Right cardiac atrium (tissue), 5 donors: ENCODE measurements at regions of chr11 and their contacts with region 1.

Region 1: GRCh38 chr11:5791165-5791564 is at the start of gene OR52N1:
- DNase-seq: no peak
- ATAC-seq: no peak
- H3K4me3 ChIP-seq: no peak within 1 kb of the TSS
- H3K27ac ChIP-seq: no peak within 1 kb of the TSS
- H3K4me1 ChIP-seq: no peaks in the 10 kb centered on the region
- H3K27me3 ChIP-seq: no peaks in the 10 kb centered on the region
- total RNA-seq, gene OR52N1: not detected

Region 2: GRCh38 chr11:5767056-5767455 is 24.1 kb before region 1 on chr11:
- intact Hi-C with region 1: loop called in 1 of 4 experiments (anchors 2 kb)
- DNase-seq: no peak
- ATAC-seq: no peak
- H3K4me3 ChIP-seq: no peak overlapping the region
- H3K27ac ChIP-seq: no peak overlapping the region
- H3K4me1 ChIP-seq: no peaks in the 10 kb centered on the region
- H3K27me3 ChIP-seq: no peaks in the 10 kb centered on the region

Region 3: GRCh38 chr11:5837695-5838094 is 46.5 kb after region 1 on chr11:
- intact Hi-C with region 1: no loop called
- DNase-seq: no peak
- ATAC-seq: no peak
- H3K4me3 ChIP-seq: no peak overlapping the region
- H3K27ac ChIP-seq: no peak overlapping the region
- H3K4me1 ChIP-seq: no peaks in the 10 kb centered on the region
- H3K27me3 ChIP-seq: no peaks in the 10 kb centered on the region